GM13976 (cell line): ENCODE measurements at regions of chr4 and their contacts with region 1.

Region 1: DNA sequence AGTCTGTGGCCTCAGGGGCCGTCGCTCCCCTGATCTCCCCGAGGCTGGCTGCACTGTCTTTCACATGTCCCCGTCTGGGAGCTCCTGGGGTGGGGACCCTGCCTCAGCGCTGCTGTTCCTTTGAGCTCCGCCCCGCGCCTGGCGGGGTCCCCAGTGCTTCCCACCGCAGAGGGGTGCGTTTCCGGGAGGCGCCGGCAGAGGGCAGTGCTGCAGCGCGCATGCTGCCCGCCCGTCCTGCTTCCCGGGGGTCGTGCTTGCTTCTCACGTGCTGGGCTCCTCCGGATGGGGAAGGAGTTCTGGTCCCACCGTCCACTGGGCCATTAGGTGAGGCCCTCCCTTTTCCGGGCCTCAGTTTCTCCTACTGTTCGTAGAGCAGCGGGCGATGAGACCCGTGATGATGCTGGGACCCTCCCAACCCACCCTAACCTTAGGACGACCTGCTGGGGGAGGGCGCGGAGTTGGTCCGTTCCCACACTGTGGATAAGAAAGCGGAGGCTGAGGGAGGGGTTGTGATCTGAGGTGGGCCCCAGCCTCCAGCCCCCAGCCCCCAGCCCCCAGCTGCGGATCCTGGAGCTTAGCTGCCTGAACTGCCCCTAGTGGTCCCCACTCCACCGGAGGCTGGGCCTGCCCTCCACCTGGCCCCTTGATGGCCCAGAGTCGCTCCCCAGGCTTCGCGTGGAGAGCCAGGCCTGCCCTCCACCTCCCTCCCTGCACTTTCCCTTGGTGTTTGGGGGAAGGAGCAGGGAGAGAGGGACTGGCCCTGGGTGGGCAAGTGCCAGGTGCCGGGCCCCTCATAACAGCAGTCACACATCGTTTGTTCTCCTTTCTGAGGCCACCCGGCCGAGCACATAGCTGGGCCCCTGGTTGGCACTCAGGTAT is 15.3 kb downstream of the CPZ start:
- DNase-seq: peak; percentile 86
- CTCF ChIP-seq: peak; percentile 91

Region 2: DNA sequence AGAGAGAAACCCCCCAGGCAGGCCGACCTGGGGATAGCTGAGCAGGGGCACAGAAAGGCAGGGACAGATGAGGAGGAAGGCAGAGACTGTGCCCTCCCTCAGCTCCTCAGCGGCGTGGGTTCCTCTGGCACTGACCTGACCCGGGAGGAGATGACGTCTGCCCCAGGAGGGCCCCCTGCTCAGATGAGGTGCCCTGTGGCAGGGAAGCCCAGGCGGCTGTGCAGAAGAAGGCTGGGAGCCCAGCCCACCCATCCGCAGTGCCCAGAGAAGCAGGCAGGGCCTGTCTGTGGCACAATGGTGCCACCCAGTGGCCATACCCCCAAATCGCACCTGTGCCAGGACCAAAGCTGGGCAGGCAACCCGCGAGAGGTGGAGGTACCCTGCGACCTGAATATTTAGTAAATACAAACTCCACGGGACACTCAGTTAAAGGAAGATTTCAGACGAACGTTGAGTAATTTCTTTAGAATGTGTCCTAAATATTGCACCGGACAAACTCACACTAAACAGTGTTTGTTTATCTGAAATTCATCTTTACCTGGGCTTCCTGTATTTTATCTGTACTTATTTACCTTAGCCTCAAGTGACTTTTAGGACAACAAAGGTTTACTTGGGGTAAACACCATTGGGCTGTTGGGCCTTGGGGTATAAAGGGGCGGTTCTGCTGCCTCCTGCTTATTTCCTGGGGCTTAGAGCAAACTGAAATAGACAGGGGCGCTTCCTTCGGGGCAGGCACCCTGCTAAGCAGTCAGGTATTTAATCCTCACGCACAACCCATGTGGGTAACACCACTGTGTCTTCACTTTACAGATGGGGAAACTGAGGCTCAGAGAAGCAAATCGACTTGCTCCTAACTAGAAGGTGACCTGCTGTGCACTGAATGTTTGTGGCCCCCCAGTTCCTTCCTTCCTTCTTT is 310.3 kb after region 1 on chr4:
- in situ Hi-C with region 1: loop called (anchors 25 kb)
- DNase-seq: peak; percentile 88
- CTCF ChIP-seq: peak; percentile 94